Heart right ventricle (tissue), 16 donors: ENCODE measurements at regions of chr7 and their contacts with region 1.

Region 1: GRCh38 chr7:4681886-4682620 is at the start of gene FOXK1:
- DNase-seq: peak; percentile 76 to 85
- ATAC-seq: peak; percentile 45 to 86 (median 70)
- H3K4me3 ChIP-seq: peak within 1 kb of the TSS; percentile 42 to 99 (median 93)
- H3K27ac ChIP-seq: peak within 1 kb of the TSS; percentile 91 to 98 (median 95)
- H3K4me1 ChIP-seq: peaks cover 6 to 41% (median 25%) of the 10 kb centered on the region in 9 donors
- H3K27me3 ChIP-seq: no peaks in the 10 kb centered on the region
- CTCF ChIP-seq: peak in 1 of 9 donors; percentile 29
- total RNA-seq, gene FOXK1: 17.6 to 30.6 (median 25.4) TPM

Region 2: GRCh38 chr7:4610768-4611467 is 71.1 kb before region 1 on chr7:
- intact Hi-C with region 1: loop called in 1 of 10 experiments (anchors 2 kb)
- DNase-seq: peak in 1 of 2 donors; percentile 66
- ATAC-seq: peak; percentile 52 to 78 (median 68)
- H3K4me3 ChIP-seq: no peak overlapping the region
- H3K27ac ChIP-seq: no peak overlapping the region
- H3K4me1 ChIP-seq: peaks cover 0 to 23% (median 15%) of the 10 kb centered on the region in 9 donors
- H3K27me3 ChIP-seq: peaks cover 0 to 8% (median 0%) of the 10 kb centered on the region in 7 donors
- CTCF ChIP-seq: peak; percentile 57 to 89 (median 83)

Region 3: GRCh38 chr7:4641667-4642467 is 40.2 kb before region 1 on chr7:
- intact Hi-C with region 1: loop called in 9 of 10 experiments (anchors 1 to 5 kb)
- DNase-seq: peak; percentile 94 to 97
- ATAC-seq: peak; percentile 96 to 98 (median 97)
- H3K4me3 ChIP-seq: peak overlapping the region; percentile 15 to 78 (median 64)
- H3K27ac ChIP-seq: peak overlapping the region; percentile 37 to 95 (median 86)
- H3K4me1 ChIP-seq: peaks cover 0 to 16% (median 10%) of the 10 kb centered on the region in 9 donors
- H3K27me3 ChIP-seq: no peaks in the 10 kb centered on the region
- CTCF ChIP-seq: peak; percentile 17 to 81 (median 41)

Region 4: DNA sequence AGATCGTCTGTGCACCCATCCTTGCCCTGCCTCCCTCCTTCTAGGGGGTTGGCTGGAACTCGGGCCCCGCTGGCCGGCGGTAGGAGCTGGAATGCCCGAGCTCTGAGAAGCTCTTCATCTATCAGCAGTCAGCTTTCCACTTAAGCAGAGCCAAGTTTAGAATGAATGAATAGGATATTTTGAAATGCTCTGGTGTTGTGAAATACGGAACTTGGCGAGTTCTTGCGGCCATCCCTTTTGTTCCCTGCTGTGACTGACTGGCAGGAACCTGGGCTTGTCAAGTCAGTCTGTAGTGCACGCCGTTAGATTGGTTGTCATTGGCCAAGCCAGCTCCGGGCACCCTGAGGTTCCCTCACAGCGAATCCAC is 33.3 kb after region 1 on chr7:
- intact Hi-C with region 1: loop called in 1 of 10 experiments (anchors 5 kb)
- DNase-seq: peak; percentile 69 to 71
- ATAC-seq: peak; percentile 86 to 93 (median 90)
- H3K4me3 ChIP-seq: peak overlapping the region in 4 of 10 donors; percentile 5 to 34 (median 10)
- H3K27ac ChIP-seq: peak overlapping the region in 7 of 10 donors; percentile 47 to 70 (median 53)
- H3K4me1 ChIP-seq: peaks cover 9 to 65% (median 42%) of the 10 kb centered on the region in 9 donors
- H3K27me3 ChIP-seq: no peaks in the 10 kb centered on the region
- CTCF ChIP-seq: no peak

Region 5: DNA sequence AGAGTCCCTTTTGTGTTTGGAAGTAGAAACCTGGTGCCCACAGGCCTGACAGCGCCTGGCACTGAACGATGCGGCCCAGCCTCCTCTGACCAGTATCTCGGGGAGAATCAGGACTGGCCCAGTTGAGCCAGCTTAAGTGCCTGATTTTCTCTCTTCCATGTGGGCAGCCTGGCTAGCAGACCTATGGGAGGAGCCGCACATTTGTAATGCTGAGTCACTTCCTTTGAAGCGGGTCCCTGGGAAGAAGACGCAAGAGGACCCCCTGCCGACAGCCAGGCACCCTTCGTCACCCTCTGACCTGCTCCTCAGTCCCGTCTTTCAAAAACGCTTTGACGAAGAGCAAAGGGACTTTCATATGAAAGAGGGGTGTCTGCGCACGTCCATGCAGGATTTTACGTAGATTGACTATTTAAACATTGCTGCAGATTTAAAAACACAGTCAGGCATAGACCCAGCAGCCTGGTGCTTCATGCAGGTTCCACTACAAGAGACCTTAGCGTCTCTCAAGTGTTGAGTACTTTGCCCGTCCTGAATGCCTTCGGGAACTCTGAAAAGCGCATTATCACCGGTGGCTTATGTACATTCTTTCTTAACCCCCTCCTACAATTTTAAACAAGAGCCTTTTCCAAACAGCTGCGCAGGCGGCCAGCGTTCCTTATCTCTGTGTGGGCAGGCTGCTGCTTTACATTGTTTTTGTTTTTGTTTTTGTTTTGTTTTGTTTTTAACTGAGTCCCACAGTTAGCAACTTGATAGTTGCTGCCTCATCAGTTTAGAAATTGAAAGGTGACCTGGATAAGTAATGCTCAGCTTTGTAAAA is 56.9 kb after region 1 on chr7:
- intact Hi-C with region 1: loop called in 4 of 10 experiments (anchors 2 to 10 kb)
- DNase-seq: peak in 1 of 2 donors; percentile 59
- ATAC-seq: peak; percentile 35 to 76 (median 66)
- H3K4me3 ChIP-seq: peak overlapping the region in 9 of 10 donors; percentile 2 to 49 (median 32)
- H3K27ac ChIP-seq: peak overlapping the region; percentile 25 to 85 (median 79)
- H3K4me1 ChIP-seq: peaks cover 2 to 68% (median 48%) of the 10 kb centered on the region in 9 donors
- H3K27me3 ChIP-seq: no peaks in the 10 kb centered on the region
- CTCF ChIP-seq: peak in 3 of 9 donors; percentile 10 to 35 (median 17)

Region 6: DNA sequence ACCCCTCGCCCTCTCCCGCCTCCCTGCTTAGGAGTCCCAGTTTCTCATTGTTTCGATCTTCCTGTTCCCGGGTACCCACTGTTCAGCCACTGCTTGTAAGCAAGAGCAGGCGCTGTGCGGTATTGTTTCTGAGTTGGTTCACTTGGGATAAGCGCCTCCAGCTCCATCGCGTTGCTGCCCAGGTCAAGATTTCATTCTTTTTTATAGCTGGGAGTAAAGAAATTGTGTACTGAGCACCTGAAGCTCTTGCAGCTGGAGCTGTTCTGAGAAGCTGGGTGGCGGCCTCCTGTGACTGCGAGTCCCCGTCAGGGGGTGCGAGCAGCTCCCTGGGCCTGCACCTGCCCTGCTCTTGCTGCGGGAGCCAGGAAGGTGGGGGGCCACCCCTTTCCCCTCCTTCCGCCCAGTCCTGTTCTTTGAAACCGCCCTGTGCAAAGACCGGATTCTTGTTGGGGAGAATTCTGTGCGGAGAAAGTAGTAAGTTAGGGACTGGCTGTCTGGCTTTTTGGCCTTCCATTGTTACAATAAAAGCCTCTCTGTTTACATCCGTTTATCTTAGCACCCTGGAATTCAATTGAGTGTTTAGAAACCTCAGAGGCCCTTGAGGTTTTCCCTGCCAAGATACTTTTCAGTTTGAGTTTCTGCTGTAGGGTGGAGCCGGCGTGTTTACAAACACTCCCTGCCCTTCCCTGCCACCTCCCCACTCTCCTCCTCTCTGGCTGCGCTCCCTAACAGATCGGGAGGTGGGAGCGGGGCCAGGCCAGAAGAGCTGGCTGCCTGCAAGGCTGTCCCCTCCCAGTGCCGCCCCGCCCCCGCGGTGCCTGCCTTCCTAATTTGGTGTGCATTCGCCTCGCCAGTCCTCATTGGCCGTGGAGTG is 62.6 kb after region 1 on chr7:
- intact Hi-C with region 1: loop called in 7 of 10 experiments (anchors 2 to 10 kb)
- DNase-seq: peak; percentile 99 to 100
- ATAC-seq: peak; percentile 93 to 95 (median 94)
- H3K4me3 ChIP-seq: peak overlapping the region in 6 of 10 donors; percentile 24 to 47 (median 37)
- H3K27ac ChIP-seq: peak overlapping the region; percentile 81 to 97 (median 92)
- H3K4me1 ChIP-seq: peaks cover 16 to 74% (median 66%) of the 10 kb centered on the region in 9 donors
- H3K27me3 ChIP-seq: no peaks in the 10 kb centered on the region
- CTCF ChIP-seq: no peak

Region 7: DNA sequence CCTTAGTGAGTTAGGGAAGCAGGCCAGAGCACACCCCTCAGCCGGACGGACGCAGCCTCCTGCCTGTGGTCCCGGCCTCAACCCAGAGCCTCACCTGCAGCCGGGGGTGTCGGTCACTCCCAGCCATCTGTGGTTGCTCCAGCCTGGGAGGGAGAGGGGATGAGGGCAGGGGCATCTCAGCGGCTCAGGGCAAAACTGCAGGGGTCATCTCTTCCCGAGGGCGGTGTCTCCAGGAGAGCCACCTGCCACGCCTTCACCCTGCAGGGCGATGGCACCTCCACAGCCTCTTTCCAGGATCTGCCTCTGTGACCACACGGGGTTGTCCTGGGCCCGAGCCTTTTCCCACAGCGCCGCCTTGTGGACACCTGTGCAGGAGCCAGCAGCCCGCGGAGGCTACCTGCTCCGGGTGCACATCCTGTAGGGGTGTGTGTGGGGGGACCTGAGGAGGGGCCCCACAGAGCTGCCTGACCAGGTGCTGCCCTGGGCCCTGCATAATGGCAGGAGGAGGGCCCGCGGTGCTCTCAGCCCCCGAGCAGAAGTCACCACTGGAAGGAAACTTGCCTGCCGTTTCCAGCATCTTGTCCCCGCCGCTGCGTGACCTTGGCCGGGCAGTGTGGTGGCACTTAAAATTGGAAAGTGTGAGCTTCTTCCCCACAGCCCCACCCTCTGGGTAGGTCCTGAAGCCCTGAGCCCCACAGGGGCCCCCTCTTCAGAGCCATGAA is 71.8 kb after region 1 on chr7:
- intact Hi-C with region 1: loop called in 8 of 10 experiments (anchors 2 to 10 kb)
- DNase-seq: peak; percentile 76 to 84
- ATAC-seq: peak; percentile 78 to 89 (median 84)
- H3K4me3 ChIP-seq: no peak overlapping the region
- H3K27ac ChIP-seq: no peak overlapping the region
- H3K4me1 ChIP-seq: peaks cover 0 to 21% (median 16%) of the 10 kb centered on the region in 9 donors
- H3K27me3 ChIP-seq: no peaks in the 10 kb centered on the region
- CTCF ChIP-seq: peak; percentile 68 to 91 (median 87)